GM23248 (cell line): ENCODE measurements at regions of chr6 and their contacts with region 1.

Region 1: DNA sequence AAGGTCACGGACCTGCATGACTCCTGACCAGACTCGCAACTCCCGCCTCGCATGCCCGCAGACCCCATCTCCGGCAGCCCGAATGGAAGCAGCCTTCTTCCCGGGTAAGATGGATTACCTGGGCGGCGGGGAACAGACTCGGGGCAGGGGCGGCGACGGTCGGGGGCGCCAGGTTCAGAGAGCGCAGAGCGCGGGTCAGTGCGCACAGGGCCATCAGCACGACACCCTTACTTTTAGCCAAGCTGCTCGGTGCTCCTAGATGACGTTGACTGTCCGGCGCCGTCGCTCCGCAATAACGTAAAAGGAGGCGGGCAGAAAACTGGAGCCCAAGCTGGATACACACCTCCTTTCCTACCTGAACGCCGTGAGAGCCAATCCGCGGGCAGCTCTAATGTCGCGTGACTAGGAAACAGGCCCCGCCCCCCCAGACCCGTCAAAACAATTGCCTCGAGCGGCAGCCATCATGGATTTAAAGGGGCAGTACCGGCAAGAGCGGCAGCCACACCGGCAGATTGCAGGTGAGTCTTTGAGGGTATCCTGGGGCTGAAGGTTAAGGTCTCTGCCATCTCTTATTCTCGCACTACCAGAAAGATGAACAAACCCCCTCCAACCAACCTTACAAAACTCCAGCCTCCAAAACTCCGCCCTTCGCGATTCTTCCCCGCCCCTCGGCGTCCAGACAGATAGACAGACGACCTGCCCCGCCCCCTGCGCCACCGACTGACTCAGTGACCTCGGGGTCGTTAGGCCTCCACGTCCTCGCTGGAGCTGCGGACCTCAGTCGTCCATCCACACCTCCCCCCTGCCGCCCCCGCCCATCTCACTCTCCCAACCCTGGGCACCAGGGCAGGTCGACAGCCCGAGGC is at the starts of genes KLC4 and MRPL2:
- DNase-seq: peak; percentile 100
- H3K4me3 ChIP-seq: peak within 1 kb of the TSS; percentile 82
- H3K27ac ChIP-seq: peak within 1 kb of the TSS; percentile 72
- H3K4me1 ChIP-seq: peaks cover 5% of the 10 kb centered on the region; the same call in 1 of the 2 replicates
- H3K27me3 ChIP-seq: no peaks in the 10 kb centered on the region
- total RNA-seq, gene KLC4: 15.0 and 32.2 TPM in 2 replicates
- total RNA-seq, gene MRPL2: 18.5 and 19.7 TPM in 2 replicates

Region 2: GRCh38 chr6:43113431-43114260 is 54.2 kb after region 1 on chr6:
- in situ Hi-C with region 1: no loop called
- DNase-seq: peak; percentile 35
- H3K4me3 ChIP-seq: no peak overlapping the region
- H3K27ac ChIP-seq: peak overlapping the region; percentile 99
- H3K4me1 ChIP-seq: peaks cover 42% of the 10 kb centered on the region
- H3K27me3 ChIP-seq: no peaks in the 10 kb centered on the region

Region 3: GRCh38 chr6:43129434-43130194 is 70.2 kb after region 1 on chr6:
- in situ Hi-C with region 1: loop called (anchors 5 kb)
- DNase-seq: peak; percentile 82
- H3K4me3 ChIP-seq: no peak overlapping the region
- H3K27ac ChIP-seq: peak overlapping the region; percentile 31
- H3K4me1 ChIP-seq: peaks cover 38% of the 10 kb centered on the region
- H3K27me3 ChIP-seq: no peaks in the 10 kb centered on the region